Common myeloid progenitor, CD34-positive (primary cell): ENCODE measurements at regions of chr7 and their contacts with region 1.

Region 1: DNA sequence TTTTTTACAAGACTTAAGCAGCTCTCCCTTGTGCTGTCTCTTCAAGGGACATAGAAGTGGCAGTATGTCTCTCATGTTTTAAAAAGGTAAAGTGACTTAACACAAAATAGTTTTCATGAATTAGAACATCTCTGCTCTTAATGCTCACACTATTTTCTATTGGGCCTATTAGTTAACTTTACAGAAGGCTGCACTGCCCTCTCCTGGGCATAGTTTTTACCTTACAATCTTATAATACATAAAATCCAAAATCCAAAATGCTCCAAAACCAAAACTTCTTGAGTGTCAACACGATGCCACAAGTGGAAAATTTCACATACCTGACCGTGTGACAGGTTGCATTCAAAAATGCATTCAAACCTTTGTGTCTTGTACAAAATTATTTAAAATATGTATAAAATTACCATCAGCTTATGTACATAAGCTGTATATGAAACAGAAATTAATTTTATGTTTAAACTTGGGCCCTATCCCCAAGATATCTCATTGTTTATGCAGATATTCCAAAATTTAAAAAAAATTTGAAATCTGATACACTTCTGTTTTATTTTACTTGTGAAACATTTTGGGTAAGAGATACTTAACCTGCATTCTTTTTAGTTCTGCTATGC is 25.8 kb downstream of the TES start:
- DNase-seq: peak; percentile 66 to 83 (median 75)
- H3K4me3 ChIP-seq: no peak overlapping the region
- H3K27ac ChIP-seq: no peak overlapping the region
- H3K4me1 ChIP-seq: peaks cover 9 to 32% (median 16%) of the 10 kb centered on the region in 4 experiments
- H3K27me3 ChIP-seq: no peaks in the 10 kb centered on the region

Region 2: DNA sequence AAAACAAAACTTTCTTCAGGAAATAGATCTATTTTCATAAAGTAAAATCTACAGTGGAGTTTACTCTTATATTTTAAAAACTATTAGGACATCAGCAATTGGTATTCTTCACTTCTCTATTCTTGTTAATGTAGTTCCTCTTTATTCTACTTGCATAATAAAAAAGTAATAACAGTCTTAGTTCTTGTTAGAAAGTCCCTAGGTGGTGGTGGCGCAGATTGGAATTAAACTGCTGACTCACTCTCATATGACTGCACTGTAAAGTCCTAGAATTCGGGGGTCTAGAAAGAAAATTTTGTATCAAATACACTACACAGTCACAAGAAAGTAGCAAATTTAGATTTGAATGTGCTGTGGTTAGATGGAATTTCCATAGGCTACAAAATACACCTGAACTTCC is 70.4 kb before region 1 on chr7:
- CTCF ChIA-PET with region 1: interaction called, 91 read pairs
- POLR2A ChIA-PET with region 1: no interaction called
- DNase-seq: peak; percentile 79 to 97 (median 97)
- H3K4me3 ChIP-seq: no peak overlapping the region
- H3K27ac ChIP-seq: peak overlapping the region in 1 of 2 experiments; percentile 43
- H3K4me1 ChIP-seq: peaks cover 0 to 37% (median 14%) of the 10 kb centered on the region in 4 experiments
- H3K27me3 ChIP-seq: no peaks in the 10 kb centered on the region

Region 3: GRCh38 chr7:116180302-116180701 is 55.8 kb before region 1 on chr7:
- CTCF ChIA-PET with region 1: interaction called, 292 read pairs
- POLR2A ChIA-PET with region 1: interaction called, 6 read pairs
- DNase-seq: peak; percentile 50 to 75 (median 63)
- H3K4me3 ChIP-seq: no peak overlapping the region
- H3K27ac ChIP-seq: no peak overlapping the region
- H3K4me1 ChIP-seq: no peaks in the 10 kb centered on the region
- H3K27me3 ChIP-seq: no peaks in the 10 kb centered on the region

Region 4: DNA sequence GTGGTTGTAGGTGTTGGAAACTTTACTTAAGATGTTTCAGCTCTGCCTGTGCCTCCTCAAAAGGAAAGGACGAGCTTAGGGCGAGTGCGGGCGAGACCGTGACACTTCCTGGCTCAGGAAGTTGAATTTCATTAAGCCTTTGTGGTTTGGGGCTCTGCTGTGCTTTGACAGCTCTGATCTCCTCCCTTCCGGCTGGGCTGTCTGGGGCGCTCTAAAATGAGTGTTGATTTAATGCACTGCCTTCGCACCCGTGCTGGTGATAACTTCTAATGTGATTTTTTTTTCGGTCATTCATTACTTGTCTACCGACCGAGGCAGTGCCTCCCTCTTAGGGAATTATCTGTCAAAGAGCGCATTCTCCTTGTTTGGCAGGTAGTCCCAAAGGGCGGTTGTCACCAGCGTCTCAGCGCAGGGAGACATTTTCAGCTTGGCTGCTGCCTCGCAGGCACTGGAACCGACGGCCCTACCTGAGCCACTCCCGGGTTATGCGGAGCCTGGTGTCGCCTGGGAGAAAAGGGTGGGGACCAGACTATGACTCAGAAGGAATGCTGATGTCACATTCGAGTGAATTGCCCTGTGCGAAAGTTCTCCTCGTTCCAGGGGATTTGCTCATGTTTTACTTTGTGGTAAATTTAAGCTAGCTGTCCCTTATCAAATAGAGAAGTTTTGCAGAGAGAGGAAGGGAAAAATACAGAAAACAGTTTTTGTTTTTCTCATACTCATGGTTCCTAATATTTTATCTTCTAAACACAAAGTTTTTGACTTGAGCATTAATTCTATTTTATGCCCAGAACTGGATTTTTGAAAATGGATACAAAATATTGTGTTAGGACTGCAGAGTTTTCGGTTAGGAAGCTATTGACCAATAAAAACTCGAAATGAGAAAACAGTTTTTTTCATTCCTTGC is 24.9 kb before region 1 on chr7:
- CTCF ChIA-PET with region 1: interaction called, 21 read pairs
- POLR2A ChIA-PET with region 1: interaction called, 11 read pairs
- DNase-seq: peak; percentile 82 to 91 (median 87)
- H3K4me3 ChIP-seq: peak overlapping the region; percentile 57 to 99 (median 88)
- H3K27ac ChIP-seq: peak overlapping the region; percentile 80 to 91
- H3K4me1 ChIP-seq: peaks cover 38 to 63% (median 49%) of the 10 kb centered on the region in 4 experiments
- H3K27me3 ChIP-seq: no peaks in the 10 kb centered on the region

Region 5: DNA sequence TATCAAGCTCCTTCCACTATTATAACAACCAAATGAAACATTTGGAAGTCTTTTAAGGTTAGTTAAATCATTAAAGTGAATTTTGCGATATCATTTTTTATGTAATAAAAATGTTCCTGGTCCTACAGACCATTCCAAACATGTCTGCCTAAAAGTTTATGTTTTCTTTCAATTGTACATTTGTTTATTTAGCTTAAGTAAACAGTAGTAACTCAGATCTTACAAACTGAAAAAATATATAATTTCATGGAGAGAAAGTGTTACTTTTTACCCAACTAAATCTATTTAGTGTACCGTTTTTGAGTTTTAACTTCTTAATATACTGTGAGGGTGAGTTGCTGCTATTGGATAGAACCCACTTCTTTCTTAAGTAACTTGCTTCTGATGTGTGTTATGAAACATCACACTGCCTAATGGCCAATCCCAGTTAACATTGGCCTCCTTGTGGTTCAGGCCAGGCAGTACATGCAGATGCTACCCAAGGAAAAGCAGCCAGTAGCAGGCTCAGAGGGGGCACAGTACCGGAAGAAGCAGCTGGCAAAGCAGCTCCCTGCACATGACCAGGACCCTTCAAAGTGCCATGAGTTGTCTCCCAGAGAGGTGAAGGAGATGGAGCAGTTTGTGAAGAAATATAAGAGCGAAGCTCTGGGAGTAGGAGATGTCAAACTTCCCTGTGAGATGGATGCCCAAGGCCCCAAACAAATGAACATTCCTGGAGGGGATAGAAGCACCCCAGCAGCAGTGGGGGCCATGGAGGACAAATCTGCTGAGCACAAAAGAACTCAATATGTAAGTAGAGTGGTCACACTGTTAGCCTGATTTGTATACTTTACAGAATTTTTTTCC is 13.8 kb after region 1 on chr7:
- CTCF ChIA-PET with region 1: interaction called, 49 read pairs
- POLR2A ChIA-PET with region 1: no interaction called
- DNase-seq: peak; percentile 42 to 74 (median 70)
- H3K4me3 ChIP-seq: no peak overlapping the region
- H3K27ac ChIP-seq: no peak overlapping the region
- H3K4me1 ChIP-seq: no peaks in the 10 kb centered on the region
- H3K27me3 ChIP-seq: no peaks in the 10 kb centered on the region

Region 6: DNA sequence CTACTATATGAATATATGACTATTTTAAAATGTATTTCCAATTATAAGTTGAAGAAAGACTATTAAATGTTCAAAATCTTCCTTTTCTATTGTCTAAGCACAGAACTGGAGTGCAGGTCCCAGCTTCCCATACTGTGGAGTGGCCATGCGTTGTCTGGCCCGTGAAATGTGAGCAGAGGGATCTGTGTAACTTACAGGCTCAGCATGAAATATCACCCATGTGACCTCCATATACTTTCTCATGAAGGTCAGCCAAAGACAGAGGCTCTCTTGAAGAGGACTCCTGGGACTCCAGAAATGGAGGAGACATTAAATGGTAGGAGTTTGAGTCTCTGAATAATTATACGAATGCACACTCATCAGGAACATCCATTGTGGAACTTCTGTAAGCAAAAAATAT is 171.0 kb after region 1 on chr7:
- CTCF ChIA-PET with region 1: no interaction called
- POLR2A ChIA-PET with region 1: no interaction called
- DNase-seq: no peak
- H3K4me3 ChIP-seq: no peak overlapping the region
- H3K27ac ChIP-seq: no peak overlapping the region
- H3K4me1 ChIP-seq: no peaks in the 10 kb centered on the region
- H3K27me3 ChIP-seq: peaks cover 0 to 19% (median 3%) of the 10 kb centered on the region in 5 experiments